ENCODE measurements at regions of chr7 and their contacts with region 1.

Region 1: GRCh38 chr7:108503112-108504026 is 22.6 kb downstream of the PNPLA8 start:
- DNase-seq: peak; percentile 90
- H3K4me3 ChIP-seq: peak overlapping the region; percentile 57
- H3K27ac ChIP-seq: peak overlapping the region; percentile 95
- H3K4me1 ChIP-seq: peaks cover 30% of the 10 kb centered on the region
- CTCF ChIP-seq: no peak

Region 2: GRCh38 chr7:108395426-108395825 is 107.9 kb before region 1 on chr7:
- CTCF ChIA-PET with region 1: no interaction called
- POLR2A ChIA-PET with region 1: no interaction called
- intact Hi-C with region 1: no loop called
- DNase-seq: no peak
- H3K4me3 ChIP-seq: no peak overlapping the region
- H3K27ac ChIP-seq: no peak overlapping the region
- H3K4me1 ChIP-seq: no peaks in the 10 kb centered on the region
- CTCF ChIP-seq: no peak

Region 3: DNA sequence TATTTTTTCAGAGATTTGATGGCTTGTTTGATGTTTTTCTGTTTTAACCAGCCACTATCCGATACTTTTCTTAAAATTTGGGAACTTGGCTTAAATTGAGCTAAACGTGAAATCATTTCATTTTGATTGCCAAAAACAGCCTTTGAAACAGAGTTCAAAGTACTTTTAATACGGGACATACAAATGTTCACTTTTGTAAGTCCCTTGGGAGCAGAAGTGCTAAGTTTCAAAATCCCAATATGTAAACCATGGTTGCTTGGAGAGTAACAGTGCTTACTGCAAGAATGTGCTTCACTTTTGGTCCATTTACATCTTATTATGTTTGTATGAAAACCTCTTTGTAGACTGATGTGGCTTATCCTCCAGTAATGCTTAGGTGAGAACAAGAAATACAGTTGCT is 11.6 kb after region 1 on chr7:
- CTCF ChIA-PET with region 1: no interaction called
- POLR2A ChIA-PET with region 1: interaction called, 15 read pairs
- intact Hi-C with region 1: no loop called
- DNase-seq: no peak
- H3K4me3 ChIP-seq: no peak overlapping the region
- H3K27ac ChIP-seq: peak overlapping the region; percentile 7
- H3K4me1 ChIP-seq: peaks cover 44% of the 10 kb centered on the region
- CTCF ChIP-seq: no peak

Region 4: GRCh38 chr7:108569381-108570145 is 66.2 kb after region 1 on chr7 and contains the starts of genes DNAJB9 and THAP5:
- CTCF ChIA-PET with region 1: no interaction called
- POLR2A ChIA-PET with region 1: interaction called, 17 read pairs
- intact Hi-C with region 1: loop called (anchors 1 kb)
- DNase-seq: peak; percentile 99
- H3K4me3 ChIP-seq: peak within 1 kb of the TSS; percentile 81
- H3K27ac ChIP-seq: peak within 1 kb of the TSS; percentile 89
- H3K4me1 ChIP-seq: peaks cover 26% of the 10 kb centered on the region
- CTCF ChIP-seq: no peak
- total RNA-seq, gene DNAJB9: 20.3 and 22.4 TPM in 2 replicates
- total RNA-seq, gene THAP5: 23.5 and 24.2 TPM in 2 replicates